Dorsolateral prefrontal cortex (tissue), 120 donors: ENCODE measurements at regions of chr4 and their contacts with region 1.

Region 1: GRCh38 chr4:41072021-41072777 is 142.1 kb downstream of the APBB2 start:
- DNase-seq: peak in 1 of 10 donors; percentile 59
- H3K4me3 ChIP-seq: peak overlapping the region in 1 of 59 donors; percentile 16
- H3K27ac ChIP-seq: peak overlapping the region in 57 of 59 donors; percentile 40 to 90 (median 76)
- H3K27me3 ChIP-seq: no peaks in the 10 kb centered on the region
- CTCF ChIP-seq: peak in 49 of 56 donors; percentile 12 to 73 (median 41)

Region 2: DNA sequence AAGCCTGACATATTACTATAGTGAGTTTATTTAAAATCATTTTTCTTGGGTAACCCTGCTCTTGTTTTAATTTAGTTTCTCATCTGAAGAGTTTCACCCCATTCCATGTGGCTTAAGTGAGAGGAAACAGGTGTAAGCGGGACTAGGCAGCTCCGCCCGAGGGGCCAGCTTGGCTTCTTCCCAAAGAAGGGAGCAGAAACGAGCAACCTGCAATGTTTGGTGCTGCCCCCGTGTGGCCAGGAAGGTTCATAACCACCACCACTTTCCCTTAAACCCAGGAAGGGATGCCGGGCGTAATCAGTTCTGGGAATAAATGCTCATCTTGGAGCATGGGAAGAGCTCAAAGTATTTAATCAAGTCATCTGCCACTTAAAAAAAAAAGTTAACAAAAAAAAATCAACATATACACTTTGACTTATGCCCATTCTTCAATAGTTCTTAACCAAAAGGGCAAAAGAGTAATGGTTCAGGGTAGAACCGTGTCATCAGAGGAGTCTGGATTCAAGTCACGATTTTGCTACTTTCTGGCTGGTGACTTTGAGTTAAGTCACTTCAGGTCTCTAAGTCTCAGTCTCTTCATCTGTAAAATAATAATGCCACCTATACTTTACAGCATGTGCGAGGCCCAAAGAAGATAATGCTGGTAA is 174.5 kb before region 1 on chr4:
- intact Hi-C with region 1: no loop called
- DNase-seq: peak; percentile 46 to 83 (median 73)
- H3K4me3 ChIP-seq: peak overlapping the region in 21 of 59 donors; percentile 4 to 43 (median 32)
- H3K27ac ChIP-seq: peak overlapping the region in 4 of 59 donors; percentile 7 to 66 (median 10)
- H3K27me3 ChIP-seq: no peaks in the 10 kb centered on the region
- CTCF ChIP-seq: peak; percentile 60 to 93 (median 86)

Region 3: GRCh38 chr4:40953283-40954087 is 118.7 kb before region 1 on chr4:
- intact Hi-C with region 1: no loop called
- DNase-seq: peak in 2 of 10 donors; percentile 11 to 15
- H3K4me3 ChIP-seq: peak overlapping the region in 10 of 59 donors; percentile 1 to 31 (median 8)
- H3K27ac ChIP-seq: peak overlapping the region; percentile 32 to 94 (median 85)
- H3K27me3 ChIP-seq: no peaks in the 10 kb centered on the region
- CTCF ChIP-seq: no peak

Region 4: GRCh38 chr4:40986375-40986774 is 85.8 kb before region 1 on chr4:
- intact Hi-C with region 1: loop called in 1 of 2 experiments (anchors 5 kb)
- DNase-seq: peak in 3 of 10 donors; percentile 18 to 62 (median 59)
- H3K4me3 ChIP-seq: peak overlapping the region in 1 of 59 donors; percentile 21
- H3K27ac ChIP-seq: peak overlapping the region in 51 of 59 donors; percentile 12 to 87 (median 69)
- H3K27me3 ChIP-seq: no peaks in the 10 kb centered on the region
- CTCF ChIP-seq: peak in 10 of 56 donors; percentile 6 to 35 (median 15)

Region 5: GRCh38 chr4:41092128-41092527 is 19.9 kb after region 1 on chr4:
- intact Hi-C with region 1: loop called in 1 of 2 experiments (anchors 2 kb)
- DNase-seq: no peak
- H3K4me3 ChIP-seq: no peak overlapping the region
- H3K27ac ChIP-seq: peak overlapping the region in 15 of 59 donors; percentile 0 to 62 (median 29)
- H3K27me3 ChIP-seq: no peaks in the 10 kb centered on the region
- CTCF ChIP-seq: no peak

Region 6: DNA sequence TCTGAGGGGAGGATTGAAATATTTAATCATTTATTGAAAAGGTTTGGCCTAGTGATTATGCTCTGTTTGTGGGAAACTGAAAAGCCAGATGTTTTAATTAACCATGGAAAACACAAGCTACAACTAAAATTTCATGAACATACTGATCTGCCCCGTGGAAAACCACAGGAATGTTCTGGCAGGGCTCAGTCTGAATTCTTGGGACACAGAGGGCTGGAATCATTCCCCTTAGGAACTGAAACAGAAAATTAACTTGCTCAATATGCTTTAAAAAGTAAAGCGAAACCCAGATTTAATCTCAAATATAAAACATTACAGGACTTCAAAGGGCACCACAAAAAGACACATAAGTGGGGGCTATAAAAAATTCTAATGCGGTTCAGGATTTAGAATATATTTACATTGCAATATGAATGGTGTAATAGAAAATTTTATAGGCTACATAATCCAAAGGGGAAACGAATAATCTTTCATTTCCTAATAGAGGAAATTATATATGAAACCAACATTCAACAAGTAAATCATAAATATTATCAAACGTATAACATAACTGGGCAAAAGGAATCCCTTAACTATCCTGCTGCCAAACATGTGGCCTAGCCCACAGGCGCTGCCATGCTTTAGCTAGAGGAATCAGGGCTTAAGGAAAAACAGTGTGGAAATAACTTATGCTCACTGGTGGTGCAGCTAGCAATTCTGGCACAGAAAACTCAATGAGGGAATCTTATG is 71.3 kb after region 1 on chr4:
- intact Hi-C with region 1: loop called in 1 of 2 experiments (anchors 10 kb)
- DNase-seq: no peak
- H3K4me3 ChIP-seq: peak overlapping the region in 2 of 59 donors; percentile 5 to 8
- H3K27ac ChIP-seq: peak overlapping the region; percentile 74 to 100 (median 95)
- H3K27me3 ChIP-seq: no peaks in the 10 kb centered on the region
- CTCF ChIP-seq: no peak